ENCODE measurements at regions of chr10 and their contacts with region 1.

Region 1: GRCh38 chr10:61835069-61835945 is 66.2 kb upstream of the ARID5B start:
- DNase-seq: peak; percentile 90
- H3K4me3 ChIP-seq: no peak overlapping the region
- H3K27ac ChIP-seq: peak overlapping the region; percentile 81
- H3K4me1 ChIP-seq: peaks cover 44% of the 10 kb centered on the region
- H3K27me3 ChIP-seq: no peaks in the 10 kb centered on the region
- CTCF ChIP-seq: peak; percentile 45
- POLR2A ChIP-seq: no peak

Region 2: DNA sequence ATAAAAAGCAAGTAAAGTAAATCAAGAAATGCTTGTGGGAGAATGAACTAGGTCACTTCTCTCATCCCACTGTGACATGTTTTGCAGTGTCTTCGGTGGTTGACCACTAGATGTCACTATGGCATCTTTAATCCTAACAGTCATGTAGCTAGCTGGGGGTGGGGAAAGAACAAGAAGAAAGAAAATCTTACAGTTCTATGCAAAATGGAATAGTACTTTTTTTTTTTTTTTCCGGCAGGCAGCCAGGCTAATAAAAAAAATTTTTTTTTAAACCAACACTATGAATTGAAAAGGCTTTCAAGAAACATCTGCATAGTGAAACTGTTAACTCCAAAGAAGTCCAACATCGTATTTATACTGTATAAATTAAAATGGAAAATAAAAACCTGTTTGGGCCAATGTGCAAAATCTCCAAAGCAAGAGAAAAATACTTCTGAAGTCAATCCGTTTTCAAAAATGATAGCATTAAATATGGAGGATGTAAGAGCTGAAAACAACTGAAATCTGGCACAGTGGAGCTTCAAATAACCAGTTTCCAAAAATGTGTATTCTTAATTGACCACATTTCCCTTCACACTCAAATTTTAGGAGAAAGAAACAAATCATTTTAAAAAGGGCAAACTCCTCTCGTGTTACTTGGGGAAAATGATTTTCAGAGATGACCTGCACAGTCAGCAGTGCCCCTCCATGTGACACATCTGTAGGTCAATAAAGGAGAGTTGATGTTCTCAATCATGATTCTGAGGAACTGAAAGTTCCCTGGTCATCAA is 1018.5 kb before region 1 on chr10:
- CTCF ChIA-PET with region 1: interaction called, 9 read pairs
- POLR2A ChIA-PET with region 1: no interaction called
- dilution Hi-C with region 1: no loop called
- intact Hi-C with region 1: loop called (anchors 1 kb)
- DNase-seq: peak; percentile 88
- H3K4me3 ChIP-seq: no peak overlapping the region
- H3K27ac ChIP-seq: peak overlapping the region; percentile 36
- H3K4me1 ChIP-seq: peaks cover 26% of the 10 kb centered on the region
- H3K27me3 ChIP-seq: no peaks in the 10 kb centered on the region
- CTCF ChIP-seq: peak; percentile 64 to 71
- POLR2A ChIP-seq: no peak

Region 3: GRCh38 chr10:61140765-61141392 is 694.4 kb before region 1 on chr10:
- CTCF ChIA-PET with region 1: interaction called, 14 read pairs
- POLR2A ChIA-PET with region 1: no interaction called
- dilution Hi-C with region 1: no loop called
- intact Hi-C with region 1: loop called (anchors 1 kb)
- DNase-seq: peak; percentile 88
- H3K4me3 ChIP-seq: no peak overlapping the region
- H3K27ac ChIP-seq: peak overlapping the region; percentile 12
- H3K4me1 ChIP-seq: peaks cover 21% of the 10 kb centered on the region
- H3K27me3 ChIP-seq: no peaks in the 10 kb centered on the region
- CTCF ChIP-seq: peak; percentile 51 to 55
- POLR2A ChIP-seq: no peak

Region 4: GRCh38 chr10:61621605-61622060 is 213.7 kb before region 1 on chr10:
- CTCF ChIA-PET with region 1: no interaction called
- POLR2A ChIA-PET with region 1: no interaction called
- dilution Hi-C with region 1: no loop called
- intact Hi-C with region 1: loop called (anchors 2 kb)
- DNase-seq: peak; percentile 78
- H3K4me3 ChIP-seq: peak overlapping the region in 2 of 3 experiments; percentile 7 to 47
- H3K27ac ChIP-seq: peak overlapping the region; percentile 48
- H3K4me1 ChIP-seq: peaks cover 27% of the 10 kb centered on the region
- H3K27me3 ChIP-seq: no peaks in the 10 kb centered on the region
- CTCF ChIP-seq: no peak
- POLR2A ChIP-seq: no peak

Region 5: GRCh38 chr10:61793760-61794703 is 41.3 kb before region 1 on chr10:
- CTCF ChIA-PET with region 1: interaction called, 6 read pairs
- POLR2A ChIA-PET with region 1: no interaction called
- dilution Hi-C with region 1: no loop called
- intact Hi-C with region 1: loop called (anchors 2 kb)
- DNase-seq: peak; percentile 70
- H3K4me3 ChIP-seq: no peak overlapping the region
- H3K27ac ChIP-seq: peak overlapping the region; percentile 20
- H3K4me1 ChIP-seq: peaks cover 21% of the 10 kb centered on the region
- H3K27me3 ChIP-seq: no peaks in the 10 kb centered on the region
- CTCF ChIP-seq: no peak
- POLR2A ChIP-seq: no peak

Region 6: GRCh38 chr10:61937631-61938351 is 102.5 kb after region 1 on chr10:
- CTCF ChIA-PET with region 1: interaction called, 5 read pairs
- POLR2A ChIA-PET with region 1: no interaction called
- dilution Hi-C with region 1: no loop called
- intact Hi-C with region 1: loop called (anchors 2 kb)
- DNase-seq: peak; percentile 79
- H3K4me3 ChIP-seq: peak overlapping the region in 1 of 3 experiments; percentile 0
- H3K27ac ChIP-seq: peak overlapping the region; percentile 20
- H3K4me1 ChIP-seq: peaks cover 36% of the 10 kb centered on the region
- H3K27me3 ChIP-seq: no peaks in the 10 kb centered on the region
- CTCF ChIP-seq: no peak
- POLR2A ChIP-seq: no peak

Region 7: GRCh38 chr10:62098278-62099121 is 263.2 kb after region 1 on chr10:
- CTCF ChIA-PET with region 1: no interaction called
- POLR2A ChIA-PET with region 1: no interaction called
- dilution Hi-C with region 1: no loop called
- intact Hi-C with region 1: no loop called
- DNase-seq: no peak
- H3K4me3 ChIP-seq: no peak overlapping the region
- H3K27ac ChIP-seq: no peak overlapping the region
- H3K4me1 ChIP-seq: peaks cover 8% of the 10 kb centered on the region
- H3K27me3 ChIP-seq: no peaks in the 10 kb centered on the region
- CTCF ChIP-seq: no peak
- POLR2A ChIP-seq: no peak

Region 8: GRCh38 chr10:62130948-62131347 is 295.6 kb after region 1 on chr10:
- CTCF ChIA-PET with region 1: no interaction called
- POLR2A ChIA-PET with region 1: no interaction called
- dilution Hi-C with region 1: no loop called
- intact Hi-C with region 1: loop called (anchors 2 kb)
- DNase-seq: peak; percentile 99
- H3K4me3 ChIP-seq: no peak overlapping the region
- H3K27ac ChIP-seq: peak overlapping the region; percentile 78
- H3K4me1 ChIP-seq: peaks cover 29% of the 10 kb centered on the region
- H3K27me3 ChIP-seq: no peaks in the 10 kb centered on the region
- CTCF ChIP-seq: no peak
- POLR2A ChIP-seq: peak; percentile 51